Posterior vena cava (tissue), 2 donors: ENCODE measurements at regions of chr11 and their contacts with region 1.

Region 1: DNA sequence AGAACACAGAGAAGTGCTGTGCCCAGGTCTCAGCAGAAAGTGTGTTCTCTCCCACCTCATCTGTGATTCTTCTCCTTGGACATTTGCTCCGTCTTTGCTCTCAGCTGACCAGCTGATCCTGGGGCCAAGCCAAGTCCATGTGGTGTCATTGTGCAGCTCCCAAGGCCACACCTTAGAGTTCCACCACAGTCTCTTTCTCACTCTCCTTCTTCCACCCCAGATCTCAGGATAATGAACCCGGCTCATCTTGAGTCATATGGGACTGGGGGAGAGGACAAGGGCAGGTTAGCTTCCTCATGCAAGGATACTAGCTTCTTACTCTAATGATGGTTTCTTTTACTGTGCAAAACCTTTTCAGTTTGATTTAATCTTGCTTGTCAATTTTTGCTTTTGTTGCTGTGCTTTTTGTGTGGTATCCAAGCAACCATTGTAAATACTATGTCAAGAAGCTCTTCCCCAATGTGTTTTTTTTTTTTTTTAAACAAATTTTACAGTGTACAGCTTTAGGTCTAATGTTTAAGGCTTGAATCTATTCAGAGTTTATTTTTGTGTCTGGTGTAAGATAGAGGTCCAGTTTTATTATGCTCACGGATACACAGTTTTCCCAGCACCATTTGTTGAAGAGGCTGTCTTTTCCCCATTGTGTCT is 75.0 kb upstream of the OR4B1 start:
- DNase-seq: no peak

Region 2: GRCh38 chr11:48127521-48128183 is 13.9 kb before region 1 on chr11:
- intact Hi-C with region 1: loop called in 1 of 2 experiments (anchors 1 kb)
- DNase-seq: no peak

Region 3: GRCh38 chr11:48167380-48167779 is 25.8 kb after region 1 on chr11:
- intact Hi-C with region 1: no loop called
- DNase-seq: no peak